Activated T-helper 1 cell treated with anti-CD3 and anti-CD28 coated beads, Interleukin-12 subunit alpha, Interleukin-12 subunit beta, Interleukin-2, Interleukin-4 antibody, amounts not matched to agents 30 ng/mL and 10 ng/mL and 1 ng/mL, durations not matched to agents 14 hours and 24 hours and 36 hours (primary cell): ENCODE measurements at regions of chr2 and their contacts with region 1.

Region 1: DNA sequence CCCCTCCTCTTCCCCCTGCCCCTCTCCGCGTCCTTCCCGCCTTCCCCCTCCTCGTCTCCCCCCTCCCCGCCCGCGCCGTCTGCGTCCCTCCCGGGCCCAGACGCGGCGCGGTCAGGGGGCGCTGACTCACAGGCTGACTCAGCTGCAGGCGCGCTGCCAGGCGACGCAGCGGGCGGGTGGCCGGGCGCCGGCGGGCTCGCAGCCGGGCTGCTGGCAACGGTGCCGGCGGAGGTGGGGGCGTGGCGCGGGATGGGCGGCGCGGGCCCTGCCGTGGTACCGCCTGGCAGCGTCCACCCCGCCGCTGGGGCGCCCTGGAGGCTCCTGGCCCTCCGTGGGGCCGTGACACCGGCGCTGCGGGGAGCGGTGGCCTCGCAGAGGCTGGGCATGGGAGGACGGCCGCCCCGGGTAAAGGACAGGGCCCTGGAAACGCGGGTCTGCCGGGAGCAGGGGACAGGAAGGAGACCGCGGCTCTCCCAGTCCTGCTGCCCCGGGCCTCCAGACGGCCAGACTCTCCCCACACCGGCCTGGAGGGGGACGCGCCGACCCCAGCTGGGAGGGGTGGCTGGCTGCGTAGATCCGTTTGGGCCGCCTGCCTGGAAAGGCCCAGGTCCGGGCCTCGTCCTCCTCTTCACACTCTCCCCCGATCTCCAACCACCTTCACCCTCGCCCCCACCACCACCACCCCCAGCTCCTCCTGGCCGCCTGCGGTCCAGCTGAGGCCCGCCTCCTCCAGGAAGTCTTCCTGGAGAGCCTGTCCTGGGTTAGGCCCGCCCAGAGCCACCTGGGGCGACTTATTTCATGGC is 10.0 kb upstream of the PROC start:
- DNase-seq: peak; percentile 80
- H3K4me3 Mint-ChIP-seq: peak overlapping the region; percentile 53
- H3K27ac Mint-ChIP-seq: peak overlapping the region; percentile 71
- H3K4me1 Mint-ChIP-seq: peaks cover 28% of the 10 kb centered on the region
- H3K27me3 Mint-ChIP-seq: peaks cover 15% of the 10 kb centered on the region

Region 2: GRCh38 chr2:127464470-127465257 is 56.5 kb after region 1 on chr2:
- intact Hi-C with region 1: loop called (anchors 1 kb)
- DNase-seq: no peak
- H3K4me3 Mint-ChIP-seq: peak overlapping the region; percentile 46
- H3K27ac Mint-ChIP-seq: peak overlapping the region; percentile 85
- H3K4me1 Mint-ChIP-seq: peaks cover 38% of the 10 kb centered on the region
- H3K27me3 Mint-ChIP-seq: peaks cover 2% of the 10 kb centered on the region

Region 3: DNA sequence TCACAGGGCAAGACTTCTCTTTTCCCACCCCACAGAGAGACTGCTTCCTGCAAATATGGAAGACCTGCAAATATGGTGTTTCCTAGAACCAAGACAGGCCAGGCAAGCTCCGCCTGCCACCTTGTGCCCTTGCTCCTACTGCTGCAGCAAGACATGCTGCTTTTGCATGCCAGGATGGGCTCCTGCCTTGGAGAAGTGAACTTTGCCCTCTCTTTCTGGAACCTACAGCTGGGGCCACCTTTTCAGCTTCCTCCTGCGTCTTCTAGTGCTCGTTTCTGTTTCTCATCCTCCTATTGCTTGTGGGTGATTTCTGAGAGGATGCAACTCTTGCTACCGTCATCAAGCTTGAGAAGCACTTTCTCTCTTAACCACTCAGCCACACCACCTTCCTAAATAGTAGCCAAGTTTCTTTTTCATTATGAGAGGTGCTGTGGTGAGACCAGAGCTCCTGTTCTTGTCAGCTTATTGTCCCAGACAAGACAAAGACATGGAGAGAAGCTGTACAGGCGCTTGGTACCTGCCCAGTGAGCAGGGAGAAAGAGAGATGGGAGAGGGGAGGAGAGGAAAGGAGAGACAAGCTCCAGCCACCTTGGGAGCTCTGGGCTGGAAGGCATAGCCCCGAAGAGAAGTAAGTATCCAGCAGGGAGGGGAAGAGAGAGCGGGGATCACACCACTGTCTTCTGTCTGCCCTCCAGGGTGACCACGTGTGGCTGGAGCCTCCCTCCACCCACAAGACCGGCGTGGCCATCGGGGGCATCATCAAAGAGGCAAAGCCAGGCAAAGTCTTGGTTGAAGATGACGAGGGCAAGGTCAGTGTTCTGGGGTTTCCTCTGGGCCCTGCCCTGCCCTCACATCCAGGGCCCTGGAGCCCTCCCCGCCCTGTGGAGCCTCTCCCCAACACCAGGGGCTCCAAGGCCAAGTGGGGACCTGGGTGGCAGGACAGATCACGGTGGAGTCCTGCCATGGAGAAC is 155.5 kb after region 1 on chr2:
- intact Hi-C with region 1: loop called (anchors 1 kb)
- DNase-seq: peak; percentile 46
- H3K4me3 Mint-ChIP-seq: peak overlapping the region; percentile 12
- H3K27ac Mint-ChIP-seq: peak overlapping the region; percentile 30
- H3K4me1 Mint-ChIP-seq: peaks cover 16% of the 10 kb centered on the region
- H3K27me3 Mint-ChIP-seq: peaks cover 32% of the 10 kb centered on the region

Region 4: DNA sequence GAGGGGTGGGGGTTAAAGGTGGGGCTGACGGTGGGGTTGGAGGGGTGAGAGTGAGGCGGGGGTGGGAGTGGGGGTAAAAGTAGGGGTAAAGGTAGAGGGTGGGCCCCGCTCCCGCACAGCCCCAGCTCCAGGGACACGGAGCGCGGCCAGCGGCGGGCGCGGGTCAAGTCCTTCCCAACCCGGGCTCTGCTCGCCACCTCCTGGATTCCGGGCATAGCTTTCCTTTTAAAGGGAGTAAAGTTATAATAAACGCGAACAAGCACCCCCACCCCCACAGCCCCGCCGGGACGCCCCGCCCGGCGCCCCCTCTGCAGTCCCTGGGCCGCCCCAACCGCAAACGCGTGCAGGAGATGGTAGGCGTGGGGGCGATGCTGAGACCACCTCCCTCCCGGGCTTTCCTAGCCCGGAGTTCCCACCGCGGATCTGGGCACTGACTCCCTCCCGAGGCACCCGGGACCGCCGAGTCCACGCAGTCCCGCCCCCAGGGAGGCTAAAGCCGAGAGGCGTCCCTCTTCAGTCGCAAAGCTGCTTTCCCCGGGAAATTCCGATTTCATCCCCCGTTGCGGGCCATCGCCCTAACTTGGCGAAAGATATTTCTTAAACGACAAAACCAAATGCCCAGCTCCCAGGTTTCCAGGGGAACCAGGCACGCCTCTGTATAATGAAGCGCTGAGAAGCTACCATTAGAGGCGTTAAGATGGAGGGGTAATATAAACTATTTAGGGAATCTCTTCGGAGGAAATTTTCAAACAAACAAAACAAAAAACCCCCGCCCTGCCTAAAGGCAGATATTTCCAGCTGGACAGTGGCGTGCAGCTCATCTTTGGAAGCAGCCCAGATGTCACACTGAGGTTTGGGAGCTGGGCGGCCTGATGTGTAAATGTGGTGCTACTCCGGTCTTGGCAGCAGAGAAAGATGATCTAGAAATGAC is 267.4 kb after region 1 on chr2 and contains the start of gene LIMS2:
- intact Hi-C with region 1: no loop called
- DNase-seq: no peak
- H3K4me3 Mint-ChIP-seq: peak within 1 kb of the TSS; percentile 72
- H3K27ac Mint-ChIP-seq: no peak within 1 kb of the TSS
- H3K4me1 Mint-ChIP-seq: peaks cover 10% of the 10 kb centered on the region
- H3K27me3 Mint-ChIP-seq: peaks cover 53% of the 10 kb centered on the region
- total RNA-seq, gene LIMS2: 4.8 and 5.1 TPM in 2 replicates